ENCODE measurements at regions of chr2 and their contacts with region 1.

Region 1: GRCh38 chr2:239035361-239036078 is 187.6 kb downstream of the TWIST2 start:
- DNase-seq: no peak
- H3K4me3 ChIP-seq: no peak overlapping the region
- H3K27ac ChIP-seq: no peak overlapping the region
- H3K4me1 ChIP-seq: peaks cover 0 to 8% (median 0%) of the 10 kb centered on the region in 3 donors
- H3K27me3 ChIP-seq: peaks cover 0 to 33% (median 0%) of the 10 kb centered on the region in 4 donors
- CTCF ChIP-seq: peak; percentile 60 to 98 (median 69)
- POLR2A ChIP-seq: no peak

Region 2: DNA sequence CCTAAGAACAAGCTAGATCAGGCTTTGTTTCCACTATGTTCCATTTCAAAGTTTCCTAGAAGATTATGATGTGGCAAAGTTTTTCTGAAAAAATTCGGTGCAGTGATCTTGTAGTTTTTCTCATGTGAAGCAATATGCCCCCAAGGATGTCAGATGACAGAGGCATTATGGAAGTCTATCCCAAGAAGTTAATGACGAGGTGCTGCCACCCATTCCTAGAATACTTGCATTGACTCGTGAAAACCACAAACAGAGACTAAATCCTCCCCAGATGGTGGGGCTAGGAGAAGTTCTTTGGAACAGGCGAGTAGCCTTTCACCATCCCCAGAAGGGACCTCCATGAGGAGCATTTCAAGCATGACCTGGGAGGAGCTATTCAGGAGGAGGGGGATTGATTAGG is 1990.1 kb before region 1 on chr2:
- intact Hi-C with region 1: no loop called
- DNase-seq: no peak
- H3K4me3 ChIP-seq: no peak overlapping the region
- H3K27ac ChIP-seq: no peak overlapping the region
- H3K4me1 ChIP-seq: no peaks in the 10 kb centered on the region
- H3K27me3 ChIP-seq: peaks cover 0 to 3% (median 0%) of the 10 kb centered on the region in 4 donors
- CTCF ChIP-seq: no peak
- POLR2A ChIP-seq: no peak

Region 3: GRCh38 chr2:238573065-238573778 is 462.3 kb before region 1 on chr2:
- intact Hi-C with region 1: no loop called
- DNase-seq: no peak
- H3K4me3 ChIP-seq: no peak overlapping the region
- H3K27ac ChIP-seq: peak overlapping the region in 1 of 4 donors; percentile 31
- H3K4me1 ChIP-seq: peaks cover 6 to 51% (median 9%) of the 10 kb centered on the region in 3 donors
- H3K27me3 ChIP-seq: no peaks in the 10 kb centered on the region
- CTCF ChIP-seq: peak in 5 of 6 experiments; percentile 7 to 50 (median 37)
- POLR2A ChIP-seq: no peak

Region 4: DNA sequence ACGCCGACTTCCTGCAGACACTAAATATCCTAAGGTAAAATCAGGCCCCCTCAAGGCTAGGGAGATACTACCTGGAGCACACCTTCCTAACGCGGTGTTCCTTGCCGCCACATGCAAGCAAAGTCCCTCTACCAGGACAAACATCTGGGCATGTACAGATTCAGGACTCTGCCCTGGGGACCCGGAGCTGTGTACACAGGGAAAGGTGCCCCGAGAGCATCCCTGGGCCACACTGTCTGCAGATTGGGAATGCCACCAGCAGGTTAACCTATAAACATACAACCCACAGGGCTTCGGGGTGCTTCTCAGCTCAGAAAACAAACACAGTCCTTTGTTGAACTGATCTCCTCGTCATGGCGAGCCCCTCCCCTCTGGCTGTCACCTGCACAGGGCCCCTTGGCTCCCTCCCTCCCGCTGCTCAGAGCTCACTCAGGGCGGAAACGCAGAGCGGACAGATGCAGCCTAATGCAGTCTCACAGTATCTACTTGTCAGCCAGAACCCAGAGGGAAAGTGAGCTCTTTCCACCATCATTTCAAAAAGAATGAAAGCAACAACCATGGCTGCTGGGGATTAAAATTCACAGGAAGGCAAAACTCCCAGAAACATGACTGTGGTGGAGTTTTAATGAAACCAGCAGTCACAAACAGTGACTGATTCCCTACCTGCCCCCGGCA is 146.5 kb after region 1 on chr2:
- intact Hi-C with region 1: no loop called
- DNase-seq: no peak
- H3K4me3 ChIP-seq: no peak overlapping the region
- H3K27ac ChIP-seq: no peak overlapping the region
- H3K4me1 ChIP-seq: no peaks in the 10 kb centered on the region
- H3K27me3 ChIP-seq: no peaks in the 10 kb centered on the region
- CTCF ChIP-seq: no peak
- POLR2A ChIP-seq: no peak

Region 5: GRCh38 chr2:239889641-239890121 is 854.2 kb after region 1 on chr2:
- intact Hi-C with region 1: loop called (anchors 5 kb)
- DNase-seq: no peak
- H3K4me3 ChIP-seq: no peak overlapping the region
- H3K27ac ChIP-seq: no peak overlapping the region
- H3K4me1 ChIP-seq: peaks cover 0 to 4% (median 3%) of the 10 kb centered on the region in 3 donors
- H3K27me3 ChIP-seq: peaks cover 0 to 19% (median 0%) of the 10 kb centered on the region in 4 donors
- CTCF ChIP-seq: no peak
- POLR2A ChIP-seq: no peak

Measured in esophagus squamous epithelium (tissue), 5 donors.